Activated CD4-positive, alpha-beta T cell treated with anti-CD3 and anti-CD28 coated beads, Interleukin-2, amount 10 ng/mL, durations not matched to agents 24 days and 14 days (primary cell): ENCODE measurements at regions of chrX and their contacts with region 1.

Region 1: GRCh38 chrX:77962068-77962902 is 7.2 kb downstream of the PGAM4 start:
- DNase-seq: peak; percentile 69
- H3K4me3 Mint-ChIP-seq: peak overlapping the region; percentile 88
- H3K27ac Mint-ChIP-seq: peak overlapping the region; percentile 98
- H3K4me1 Mint-ChIP-seq: peaks cover 27% of the 10 kb centered on the region
- H3K27me3 Mint-ChIP-seq: no peaks in the 10 kb centered on the region

Region 2: GRCh38 chrX:77595848-77596247 is 366.4 kb before region 1 on chrX:
- intact Hi-C with region 1: no loop called
- DNase-seq: no peak
- H3K4me3 Mint-ChIP-seq: no peak overlapping the region
- H3K27ac Mint-ChIP-seq: no peak overlapping the region
- H3K4me1 Mint-ChIP-seq: peaks cover 10% of the 10 kb centered on the region
- H3K27me3 Mint-ChIP-seq: no peaks in the 10 kb centered on the region

Region 3: GRCh38 chrX:77937271-77937670 is 25.0 kb before region 1 on chrX:
- intact Hi-C with region 1: no loop called
- DNase-seq: no peak
- H3K4me3 Mint-ChIP-seq: no peak overlapping the region
- H3K27ac Mint-ChIP-seq: no peak overlapping the region
- H3K4me1 Mint-ChIP-seq: no peaks in the 10 kb centered on the region
- H3K27me3 Mint-ChIP-seq: no peaks in the 10 kb centered on the region

Region 4: GRCh38 chrX:78066110-78066509 is 103.8 kb after region 1 on chrX:
- intact Hi-C with region 1: loop called (anchors 10 kb)
- DNase-seq: no peak
- H3K4me3 Mint-ChIP-seq: no peak overlapping the region
- H3K27ac Mint-ChIP-seq: no peak overlapping the region
- H3K4me1 Mint-ChIP-seq: peaks cover 13% of the 10 kb centered on the region
- H3K27me3 Mint-ChIP-seq: no peaks in the 10 kb centered on the region